ENCODE measurements at regions of chr6 and their contacts with region 1.

Region 1: GRCh38 chr6:96171112-96171511 is 155.3 kb downstream of the FUT9 start:
- DNase-seq: no peak
- H3K4me3 ChIP-seq: no peak overlapping the region
- H3K4me3 Mint-ChIP-seq: no peak overlapping the region
- H3K27ac Mint-ChIP-seq: no peak overlapping the region
- H3K4me1 ChIP-seq: no peaks in the 10 kb centered on the region
- H3K4me1 Mint-ChIP-seq: no peaks in the 10 kb centered on the region
- H3K27me3 ChIP-seq: no peaks in the 10 kb centered on the region
- H3K27me3 Mint-ChIP-seq: no peaks in the 10 kb centered on the region
- CTCF ChIP-seq: no peak

Region 2: GRCh38 chr6:96223695-96224094 is 52.6 kb after region 1 on chr6:
- CTCF ChIA-PET with region 1: no interaction called
- POLR2A ChIA-PET with region 1: no interaction called
- intact Hi-C with region 1: loop called (anchors 2 kb)
- DNase-seq: no peak
- H3K4me3 ChIP-seq: no peak overlapping the region
- H3K4me3 Mint-ChIP-seq: no peak overlapping the region
- H3K27ac Mint-ChIP-seq: no peak overlapping the region
- H3K4me1 ChIP-seq: no peaks in the 10 kb centered on the region
- H3K4me1 Mint-ChIP-seq: no peaks in the 10 kb centered on the region
- H3K27me3 ChIP-seq: no peaks in the 10 kb centered on the region
- H3K27me3 Mint-ChIP-seq: no peaks in the 10 kb centered on the region
- CTCF ChIP-seq: no peak

Region 3: DNA sequence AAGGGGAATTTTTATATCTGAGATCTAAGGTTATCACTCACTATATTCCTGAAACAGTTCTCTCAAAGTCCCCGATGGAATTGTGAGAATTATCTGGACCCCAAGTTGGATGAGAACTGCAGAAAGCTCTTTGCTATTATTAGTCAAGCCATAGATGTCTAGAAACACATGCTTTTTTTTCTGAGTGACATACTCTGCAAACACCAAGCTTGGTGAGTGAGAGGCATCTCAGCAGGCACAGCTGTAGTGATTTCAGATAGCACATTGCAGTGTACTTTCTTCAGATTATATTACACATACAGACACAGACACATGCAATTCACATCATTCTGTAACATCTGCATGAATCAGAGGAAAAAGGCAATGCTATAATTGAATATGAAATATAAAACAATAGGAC is 239.4 kb after region 1 on chr6:
- CTCF ChIA-PET with region 1: no interaction called
- POLR2A ChIA-PET with region 1: no interaction called
- intact Hi-C with region 1: no loop called
- DNase-seq: no peak
- H3K4me3 ChIP-seq: no peak overlapping the region
- H3K4me3 Mint-ChIP-seq: no peak overlapping the region
- H3K27ac Mint-ChIP-seq: no peak overlapping the region
- H3K4me1 ChIP-seq: no peaks in the 10 kb centered on the region
- H3K4me1 Mint-ChIP-seq: no peaks in the 10 kb centered on the region
- H3K27me3 ChIP-seq: no peaks in the 10 kb centered on the region
- H3K27me3 Mint-ChIP-seq: no peaks in the 10 kb centered on the region
- CTCF ChIP-seq: no peak